Astrocyte of the cerebellum (primary cell): ENCODE measurements at regions of chr14 and their contacts with region 1.

Region 1: GRCh38 chr14:93629643-93630042 is 158.6 kb downstream of the PRIMA1 start:
- DNase-seq: no peak
- H3K4me3 ChIP-seq: no peak overlapping the region
- CTCF ChIP-seq: no peak

Region 2: GRCh38 chr14:93663317-93663716 is 33.7 kb after region 1 on chr14:
- in situ Hi-C with region 1: loop called (anchors 5 kb)
- DNase-seq: no peak
- H3K4me3 ChIP-seq: no peak overlapping the region
- CTCF ChIP-seq: no peak